Naive thymus-derived CD4-positive, alpha-beta T cell (primary cell): ENCODE measurements at regions of chr1 and their contacts with region 1.

Region 1: DNA sequence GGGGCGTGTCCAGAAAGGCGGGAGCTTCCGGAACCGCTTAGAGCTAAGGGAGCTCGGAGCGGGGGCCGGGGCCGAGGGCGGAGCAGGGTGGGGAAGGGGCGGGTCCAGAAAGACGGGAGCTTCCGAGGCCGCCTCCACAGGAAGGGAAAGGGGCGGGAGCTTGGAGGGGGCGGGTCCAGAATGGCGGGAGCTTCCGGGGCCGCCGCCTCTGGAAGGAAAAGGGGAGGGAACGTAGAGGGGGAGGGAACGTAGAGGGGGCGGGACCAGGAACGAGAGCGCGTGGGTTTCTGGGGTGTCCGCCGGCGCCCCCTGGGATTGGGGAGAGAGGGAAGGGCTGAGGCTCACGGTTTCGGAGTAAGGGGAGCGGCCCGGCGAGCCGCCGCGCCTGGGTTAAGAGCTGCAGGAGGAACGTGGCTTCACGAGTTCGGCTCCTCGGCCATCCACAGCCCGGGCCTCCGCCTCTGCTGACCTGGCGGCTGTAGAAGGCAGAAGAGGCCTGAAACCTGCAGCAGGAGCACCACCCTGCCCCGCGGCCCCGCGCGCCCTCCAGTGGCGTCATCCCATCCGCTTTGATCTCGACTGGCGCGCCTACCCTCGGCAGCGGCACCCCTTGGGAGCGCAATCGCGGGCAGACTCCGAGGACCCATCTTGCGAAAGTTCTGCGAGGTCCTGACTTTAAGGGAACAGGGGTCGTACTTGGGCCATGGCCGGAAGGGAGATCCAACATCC is 22.9 kb upstream of the HPDL start:
- DNase-seq: peak; percentile 86 to 96 (median 93)
- ATAC-seq: peak; percentile 94
- H3K4me3 ChIP-seq: peak overlapping the region; percentile 95
- H3K4me3 Mint-ChIP-seq: peak overlapping the region; percentile 89 to 96 (median 92)
- H3K27ac ChIP-seq: peak overlapping the region; percentile 88
- H3K27ac Mint-ChIP-seq: peak overlapping the region; percentile 90 to 97 (median 95)
- H3K4me1 ChIP-seq: peaks cover 7 to 9% of the 10 kb centered on the region in 2 donors
- H3K4me1 Mint-ChIP-seq: peaks cover 6 to 32% (median 26%) of the 10 kb centered on the region in 7 donors
- H3K27me3 ChIP-seq: no peaks in the 10 kb centered on the region
- H3K27me3 Mint-ChIP-seq: no peaks in the 10 kb centered on the region

Region 2: DNA sequence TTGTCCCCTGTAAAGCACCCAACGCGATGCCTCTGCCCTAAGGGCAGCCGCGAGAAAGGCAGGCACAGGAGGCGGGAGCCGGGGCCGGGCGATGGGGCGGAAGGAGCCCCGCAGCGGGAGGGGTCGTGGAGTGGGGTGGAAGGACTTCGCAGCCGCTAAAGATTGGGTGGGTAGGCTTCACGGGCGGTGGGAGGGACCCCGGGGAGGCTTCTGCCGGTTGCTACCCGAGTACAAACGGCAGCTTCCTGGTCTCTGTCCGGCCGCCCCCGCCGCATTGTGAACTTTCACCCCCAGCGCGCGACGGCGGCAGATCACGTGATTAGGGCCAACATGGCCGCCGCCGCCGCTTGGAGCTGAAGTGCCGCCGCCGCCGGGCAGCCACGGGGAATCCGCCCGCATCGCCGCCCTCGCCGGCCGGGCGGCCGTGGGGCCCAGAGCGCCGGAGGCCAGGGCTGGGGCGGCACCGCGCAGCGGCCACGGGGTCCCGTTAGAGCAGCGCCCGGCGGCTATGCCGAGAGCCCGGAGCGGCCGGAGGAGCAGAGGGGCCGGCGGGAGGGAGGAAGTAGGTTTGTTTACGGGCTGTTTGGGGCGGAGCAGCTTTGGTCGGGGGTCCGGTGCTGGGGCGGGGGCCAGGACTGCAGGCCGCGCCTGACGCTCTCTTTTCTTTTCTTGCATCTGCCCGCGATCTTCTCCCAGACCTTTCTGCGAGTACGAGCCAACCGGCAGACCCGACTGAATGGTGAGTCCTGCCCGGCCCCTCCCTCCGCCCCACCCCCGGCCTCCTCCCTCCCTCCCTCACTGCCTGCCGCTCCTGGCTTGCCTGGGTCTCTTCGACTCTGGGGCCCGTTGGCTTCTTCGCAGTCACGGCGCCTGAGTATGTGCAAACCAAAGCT is 671.9 kb before region 1 on chr1:
- CTCF ChIA-PET with region 1: no interaction called
- POLR2A ChIA-PET with region 1: no interaction called
- intact Hi-C with region 1: loop called in 1 of 2 experiments (anchors 1 kb)
- DNase-seq: peak; percentile 80 to 92 (median 87)
- ATAC-seq: peak; percentile 87
- H3K4me3 ChIP-seq: peak overlapping the region; percentile 70
- H3K4me3 Mint-ChIP-seq: peak overlapping the region; percentile 69 to 95 (median 90)
- H3K27ac ChIP-seq: peak overlapping the region; percentile 85
- H3K27ac Mint-ChIP-seq: peak overlapping the region; percentile 46 to 99 (median 97)
- H3K4me1 ChIP-seq: peaks cover 8 to 13% of the 10 kb centered on the region in 2 donors
- H3K4me1 Mint-ChIP-seq: peaks cover 26 to 50% (median 39%) of the 10 kb centered on the region in 7 donors
- H3K27me3 ChIP-seq: no peaks in the 10 kb centered on the region
- H3K27me3 Mint-ChIP-seq: no peaks in the 10 kb centered on the region

Region 3: GRCh38 chr1:44730741-44731512 is 572.8 kb before region 1 on chr1 and contains the start of gene RNU5D-1:
- CTCF ChIA-PET with region 1: interaction called, 3 read pairs
- POLR2A ChIA-PET with region 1: interaction called, 14 read pairs
- intact Hi-C with region 1: loop called (anchors 1 to 2 kb)
- DNase-seq: peak; percentile 77 to 92 (median 89)
- ATAC-seq: peak; percentile 85
- H3K4me3 ChIP-seq: peak within 1 kb of the TSS; percentile 18
- H3K4me3 Mint-ChIP-seq: peak within 1 kb of the TSS; percentile 54 to 93 (median 84)
- H3K27ac ChIP-seq: peak within 1 kb of the TSS; percentile 86
- H3K27ac Mint-ChIP-seq: peak within 1 kb of the TSS; percentile 97 to 100 (median 98)
- H3K4me1 ChIP-seq: peaks cover 10 to 13% of the 10 kb centered on the region in 2 donors
- H3K4me1 Mint-ChIP-seq: peaks cover 14 to 58% (median 43%) of the 10 kb centered on the region in 7 donors
- H3K27me3 ChIP-seq: no peaks in the 10 kb centered on the region
- H3K27me3 Mint-ChIP-seq: no peaks in the 10 kb centered on the region
- total RNA-seq, gene RNU5D-1: not detected

Region 4: GRCh38 chr1:44799770-44800584 is 503.8 kb before region 1 on chr1 and contains the start of gene PLK3:
- CTCF ChIA-PET with region 1: interaction called, 5 read pairs
- POLR2A ChIA-PET with region 1: interaction called, 10 read pairs
- intact Hi-C with region 1: loop called (anchors 2 to 5 kb)
- DNase-seq: peak; percentile 93 to 99 (median 98)
- ATAC-seq: peak; percentile 92
- H3K4me3 ChIP-seq: peak within 1 kb of the TSS; percentile 66
- H3K4me3 Mint-ChIP-seq: peak within 1 kb of the TSS; percentile 85 to 98 (median 93)
- H3K27ac ChIP-seq: peak within 1 kb of the TSS; percentile 94
- H3K27ac Mint-ChIP-seq: peak within 1 kb of the TSS; percentile 84 to 99 (median 98)
- H3K4me1 ChIP-seq: peaks cover 17 to 24% of the 10 kb centered on the region in 2 donors
- H3K4me1 Mint-ChIP-seq: peaks cover 19 to 43% (median 33%) of the 10 kb centered on the region in 7 donors
- H3K27me3 ChIP-seq: no peaks in the 10 kb centered on the region
- H3K27me3 Mint-ChIP-seq: no peaks in the 10 kb centered on the region
- total RNA-seq, gene PLK3: 92.8 to 456 (median 142) TPM

Region 5: GRCh38 chr1:45097944-45098343 is 205.8 kb before region 1 on chr1:
- CTCF ChIA-PET with region 1: no interaction called
- POLR2A ChIA-PET with region 1: no interaction called
- intact Hi-C with region 1: no loop called
- DNase-seq: no peak
- ATAC-seq: no peak
- H3K4me3 ChIP-seq: no peak overlapping the region
- H3K4me3 Mint-ChIP-seq: no peak overlapping the region
- H3K27ac ChIP-seq: no peak overlapping the region
- H3K27ac Mint-ChIP-seq: no peak overlapping the region
- H3K4me1 ChIP-seq: no peaks in the 10 kb centered on the region
- H3K4me1 Mint-ChIP-seq: peaks cover 0 to 6% (median 0%) of the 10 kb centered on the region in 7 donors
- H3K27me3 ChIP-seq: no peaks in the 10 kb centered on the region
- H3K27me3 Mint-ChIP-seq: peaks cover 0 to 10% (median 0%) of the 10 kb centered on the region in 5 donors

Region 6: GRCh38 chr1:45205910-45206721 is 97.6 kb before region 1 on chr1 and contains the start of gene ZSWIM5:
- CTCF ChIA-PET with region 1: no interaction called
- POLR2A ChIA-PET with region 1: no interaction called
- intact Hi-C with region 1: loop called in 1 of 2 experiments (anchors 1 kb)
- DNase-seq: peak; percentile 53 to 74 (median 66)
- ATAC-seq: peak; percentile 88
- H3K4me3 ChIP-seq: peak within 1 kb of the TSS; percentile 77
- H3K4me3 Mint-ChIP-seq: peak within 1 kb of the TSS; percentile 84 to 100 (median 94)
- H3K27ac ChIP-seq: peak within 1 kb of the TSS; percentile 50
- H3K27ac Mint-ChIP-seq: peak within 1 kb of the TSS; percentile 66 to 94 (median 83)
- H3K4me1 ChIP-seq: peaks cover 11 to 18% of the 10 kb centered on the region in 2 donors
- H3K4me1 Mint-ChIP-seq: peaks cover 13 to 41% (median 27%) of the 10 kb centered on the region in 7 donors
- H3K27me3 ChIP-seq: no peaks in the 10 kb centered on the region
- H3K27me3 Mint-ChIP-seq: peaks cover 0 to 56% (median 0%) of the 10 kb centered on the region in 5 donors
- total RNA-seq, gene ZSWIM5: 0.17 to 3.6 (median 2.3) TPM

Region 7: DNA sequence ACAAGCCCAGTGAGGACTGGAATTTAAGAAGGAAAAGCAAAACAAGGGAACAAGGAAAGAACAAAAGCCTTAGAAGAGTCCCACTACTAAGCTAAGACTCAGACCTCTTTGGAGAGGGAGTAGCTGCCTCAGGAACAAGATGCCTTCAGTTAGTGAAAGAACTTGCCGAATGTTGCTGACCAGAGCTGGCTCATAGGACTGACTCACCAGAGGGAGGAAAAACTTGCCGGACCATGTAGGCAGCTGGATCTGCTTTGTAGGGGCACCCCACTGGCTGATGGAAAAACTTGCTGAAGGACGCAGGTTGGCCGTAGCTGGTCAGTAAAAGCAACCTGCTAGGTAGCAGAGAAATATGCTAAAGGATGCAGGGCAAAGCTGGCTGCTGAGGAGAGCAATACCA is 82.0 kb before region 1 on chr1:
- CTCF ChIA-PET with region 1: no interaction called
- POLR2A ChIA-PET with region 1: no interaction called
- intact Hi-C with region 1: no loop called
- DNase-seq: no peak
- ATAC-seq: no peak
- H3K4me3 ChIP-seq: no peak overlapping the region
- H3K4me3 Mint-ChIP-seq: no peak overlapping the region
- H3K27ac ChIP-seq: no peak overlapping the region
- H3K27ac Mint-ChIP-seq: no peak overlapping the region
- H3K4me1 ChIP-seq: no peaks in the 10 kb centered on the region
- H3K4me1 Mint-ChIP-seq: no peaks in the 10 kb centered on the region
- H3K27me3 ChIP-seq: no peaks in the 10 kb centered on the region
- H3K27me3 Mint-ChIP-seq: peaks cover 0 to 6% (median 0%) of the 10 kb centered on the region in 5 donors

Region 8: GRCh38 chr1:45499415-45499769 is 195.6 kb after region 1 on chr1:
- CTCF ChIA-PET with region 1: interaction called, 9 read pairs
- POLR2A ChIA-PET with region 1: interaction called, 4 read pairs
- intact Hi-C with region 1: loop called (anchors 1 kb)
- DNase-seq: peak in 1 of 9 donors; percentile 17
- ATAC-seq: no peak
- H3K4me3 ChIP-seq: peak overlapping the region; percentile 68
- H3K4me3 Mint-ChIP-seq: peak overlapping the region; percentile 91 to 99 (median 94)
- H3K27ac ChIP-seq: peak overlapping the region; percentile 70
- H3K27ac Mint-ChIP-seq: peak overlapping the region; percentile 87 to 97 (median 92)
- H3K4me1 ChIP-seq: peaks cover 5 to 17% of the 10 kb centered on the region in 2 donors
- H3K4me1 Mint-ChIP-seq: peaks cover 24 to 38% (median 33%) of the 10 kb centered on the region in 7 donors
- H3K27me3 ChIP-seq: no peaks in the 10 kb centered on the region
- H3K27me3 Mint-ChIP-seq: no peaks in the 10 kb centered on the region

Region 9: GRCh38 chr1:46247436-46248121 is 943.8 kb after region 1 on chr1 and contains the start of gene RAD54L:
- CTCF ChIA-PET with region 1: no interaction called
- POLR2A ChIA-PET with region 1: no interaction called
- intact Hi-C with region 1: loop called in 1 of 2 experiments (anchors 5 kb)
- DNase-seq: peak; percentile 83 to 97 (median 95)
- ATAC-seq: peak; percentile 99
- H3K4me3 ChIP-seq: peak within 1 kb of the TSS; percentile 89
- H3K4me3 Mint-ChIP-seq: peak within 1 kb of the TSS; percentile 86 to 100 (median 94)
- H3K27ac ChIP-seq: peak within 1 kb of the TSS; percentile 66
- H3K27ac Mint-ChIP-seq: peak within 1 kb of the TSS; percentile 62 to 96 (median 78)
- H3K4me1 ChIP-seq: peaks cover 4 to 8% of the 10 kb centered on the region in 2 donors
- H3K4me1 Mint-ChIP-seq: peaks cover 0 to 41% (median 17%) of the 10 kb centered on the region in 7 donors
- H3K27me3 ChIP-seq: no peaks in the 10 kb centered on the region
- H3K27me3 Mint-ChIP-seq: no peaks in the 10 kb centered on the region
- total RNA-seq, gene RAD54L: 0.94 to 31.9 (median 2.1) TPM